PC-9 (cell line): ENCODE measurements at regions of chr3 and their contacts with region 1.

Region 1: GRCh38 chr3:38521391-38521987 is 25.3 kb downstream of the EXOG start:
- DNase-seq: peak; percentile 46 to 61
- H3K4me3 ChIP-seq: no peak overlapping the region
- H3K27ac ChIP-seq: no peak overlapping the region
- H3K4me1 ChIP-seq: no peaks in the 10 kb centered on the region
- H3K27me3 ChIP-seq: no peaks in the 10 kb centered on the region
- CTCF ChIP-seq: peak; percentile 91

Region 2: DNA sequence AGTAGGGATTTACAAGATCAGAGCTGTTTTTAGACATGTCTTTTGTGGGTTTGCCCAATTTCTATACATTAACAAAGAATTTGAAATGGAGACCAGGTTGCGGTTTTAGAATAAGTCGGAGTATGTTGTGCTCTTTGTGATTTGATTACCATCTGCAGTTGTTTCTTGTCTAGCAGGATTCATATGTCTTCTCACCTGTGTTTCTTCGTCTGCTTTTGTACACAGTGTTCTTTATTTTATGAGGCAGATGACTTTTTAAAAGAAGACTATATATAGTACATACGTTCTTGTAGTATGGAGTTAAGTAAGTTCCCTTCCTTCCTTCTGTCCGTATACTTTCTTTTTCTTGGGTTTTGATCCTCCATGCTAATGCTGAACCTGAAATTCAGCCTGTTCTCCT is 1171.8 kb before region 1 on chr3:
- CTCF ChIA-PET with region 1: no interaction called
- POLR2A ChIA-PET with region 1: no interaction called
- intact Hi-C with region 1: no loop called
- DNase-seq: no peak
- H3K4me3 ChIP-seq: no peak overlapping the region
- H3K27ac ChIP-seq: no peak overlapping the region
- H3K4me1 ChIP-seq: no peaks in the 10 kb centered on the region
- H3K27me3 ChIP-seq: no peaks in the 10 kb centered on the region
- CTCF ChIP-seq: no peak

Region 3: DNA sequence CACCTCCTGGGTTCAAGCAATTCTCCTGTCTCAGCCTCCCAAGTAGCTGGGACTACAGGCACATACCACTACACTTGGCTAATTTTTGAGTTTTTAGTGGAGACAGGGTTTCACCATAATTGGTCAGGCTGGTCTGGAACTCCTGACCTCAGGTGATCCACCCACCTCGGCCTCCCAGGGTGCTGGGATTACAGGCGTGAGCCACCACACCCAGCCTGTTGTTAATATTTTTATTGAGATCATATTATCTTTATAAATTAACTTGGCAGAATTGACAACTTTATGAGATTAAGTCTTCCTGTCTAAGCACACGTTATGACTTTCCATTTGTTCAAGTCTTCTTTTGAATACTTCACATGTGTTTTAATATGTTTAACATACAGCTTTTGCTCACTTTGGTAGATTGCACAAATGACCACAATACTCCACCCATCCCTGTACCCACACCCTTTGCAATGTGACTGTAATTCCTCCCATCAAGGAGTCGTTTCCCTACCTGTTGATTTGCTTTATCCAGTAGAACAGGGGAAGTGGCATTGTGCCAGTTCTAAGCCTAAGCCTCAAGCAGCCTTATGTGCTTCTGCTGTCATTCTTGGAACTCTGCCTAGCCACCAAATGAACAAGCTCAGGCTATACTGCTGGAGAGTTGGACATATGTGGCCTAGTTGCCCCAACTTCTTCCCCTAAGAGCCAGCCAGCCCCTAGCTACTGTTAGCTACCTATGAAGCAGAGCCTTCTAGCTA is 166.7 kb before region 1 on chr3:
- CTCF ChIA-PET with region 1: no interaction called
- POLR2A ChIA-PET with region 1: no interaction called
- intact Hi-C with region 1: no loop called
- DNase-seq: no peak
- H3K4me3 ChIP-seq: no peak overlapping the region
- H3K27ac ChIP-seq: no peak overlapping the region
- H3K4me1 ChIP-seq: no peaks in the 10 kb centered on the region
- H3K27me3 ChIP-seq: no peaks in the 10 kb centered on the region
- CTCF ChIP-seq: no peak

Region 4: DNA sequence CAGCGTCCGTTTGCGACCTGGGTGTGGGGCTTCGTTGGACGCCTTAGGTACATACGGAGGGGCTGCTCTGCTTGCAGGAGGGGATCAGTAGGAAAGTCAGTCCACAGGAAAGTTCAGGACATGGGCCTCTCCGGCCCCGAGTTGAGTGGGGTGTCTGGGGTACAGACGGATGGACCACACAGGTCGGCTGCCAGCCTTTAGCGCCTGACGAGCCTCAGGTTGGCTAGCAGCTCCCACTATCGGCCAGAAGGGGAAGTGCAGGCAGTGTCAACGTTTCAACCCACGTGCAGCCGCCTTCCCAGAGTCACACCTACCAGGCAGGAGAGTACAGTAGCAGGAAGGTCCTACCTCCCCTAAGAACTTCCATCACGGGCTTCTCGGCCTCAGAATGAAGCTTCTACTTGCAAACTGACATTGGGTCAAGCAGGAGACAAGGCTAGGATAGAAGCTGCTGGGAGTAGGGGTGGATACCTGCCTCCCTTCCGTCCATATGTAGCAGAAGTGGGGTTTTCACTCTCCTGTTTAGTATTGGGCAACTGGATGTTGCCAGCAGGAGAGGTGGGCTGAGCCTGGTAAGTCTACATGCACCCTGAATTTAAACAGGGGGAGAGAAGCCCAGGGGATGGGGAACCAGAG is 129.8 kb after region 1 on chr3:
- CTCF ChIA-PET with region 1: interaction called, 6 read pairs
- POLR2A ChIA-PET with region 1: no interaction called
- intact Hi-C with region 1: loop called (anchors 1 kb)
- DNase-seq: peak in 1 of 2 experiments; percentile 50
- H3K4me3 ChIP-seq: no peak overlapping the region
- H3K27ac ChIP-seq: no peak overlapping the region
- H3K4me1 ChIP-seq: no peaks in the 10 kb centered on the region
- H3K27me3 ChIP-seq: no peaks in the 10 kb centered on the region; the same call in 1 of the 2 replicates
- CTCF ChIP-seq: peak; percentile 83

Region 5: DNA sequence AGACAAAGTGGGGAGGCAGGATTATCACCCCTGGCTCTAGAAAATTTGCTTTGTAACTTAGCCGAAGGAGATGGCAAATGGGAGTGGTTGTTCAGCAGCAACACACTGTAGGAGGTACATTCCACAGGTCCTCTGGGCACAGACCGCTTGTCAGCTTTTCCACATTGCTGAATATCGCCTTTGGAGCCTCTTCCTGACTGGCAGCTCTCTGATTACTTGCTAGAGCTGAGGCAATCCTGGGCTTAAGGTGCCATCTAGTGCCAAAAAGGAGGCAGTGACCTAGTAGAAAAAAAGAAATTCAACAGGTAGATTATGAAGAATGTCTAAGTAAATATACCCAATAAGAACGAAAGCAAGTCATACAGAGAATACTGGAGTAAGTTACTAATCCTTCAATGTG is 141.1 kb after region 1 on chr3:
- CTCF ChIA-PET with region 1: interaction called, 3 read pairs
- POLR2A ChIA-PET with region 1: no interaction called
- intact Hi-C with region 1: loop called (anchors 1 kb)
- DNase-seq: peak; percentile 26 to 46
- H3K4me3 ChIP-seq: no peak overlapping the region
- H3K27ac ChIP-seq: no peak overlapping the region
- H3K4me1 ChIP-seq: no peaks in the 10 kb centered on the region
- H3K27me3 ChIP-seq: peaks cover 25% of the 10 kb centered on the region
- CTCF ChIP-seq: peak; percentile 74

Region 6: GRCh38 chr3:38843898-38844297 is 322.4 kb after region 1 on chr3:
- CTCF ChIA-PET with region 1: no interaction called
- POLR2A ChIA-PET with region 1: no interaction called
- intact Hi-C with region 1: loop called (anchors 5 kb)
- DNase-seq: no peak
- H3K4me3 ChIP-seq: no peak overlapping the region
- H3K27ac ChIP-seq: no peak overlapping the region
- H3K4me1 ChIP-seq: no peaks in the 10 kb centered on the region
- H3K27me3 ChIP-seq: peaks cover 12% of the 10 kb centered on the region
- CTCF ChIP-seq: no peak; the same call in 1 of the 2 replicates